Common myeloid progenitor, CD34-positive (primary cell): ENCODE measurements at regions of chr19 and their contacts with region 1.

Region 1: GRCh38 chr19:5578494-5578846 is 10.7 kb upstream of the TINCR start:
- DNase-seq: no peak
- H3K4me3 ChIP-seq: no peak overlapping the region
- H3K27ac ChIP-seq: no peak overlapping the region
- H3K4me1 ChIP-seq: peaks cover 0 to 10% (median 2%) of the 10 kb centered on the region in 4 experiments
- H3K27me3 ChIP-seq: no peaks in the 10 kb centered on the region

Region 2: DNA sequence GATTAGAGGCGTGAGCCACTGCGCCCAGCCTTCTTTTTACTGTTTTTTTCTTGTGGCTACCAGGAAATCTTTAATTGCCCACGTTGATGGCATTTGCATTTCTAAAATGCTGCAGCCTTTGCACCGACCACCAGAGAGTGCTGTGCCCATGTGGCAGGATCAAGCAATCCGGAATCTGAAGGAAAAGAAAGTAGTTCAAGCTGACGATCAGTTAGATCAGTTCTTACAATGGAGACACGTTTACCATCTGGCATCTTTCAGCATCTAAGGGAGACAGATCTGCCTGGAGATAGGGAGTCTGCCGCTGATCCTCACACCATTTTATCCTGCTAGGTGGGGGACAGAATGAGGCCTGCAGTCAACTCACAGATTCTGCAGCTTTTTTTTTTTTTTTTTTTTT is 30.6 kb before region 1 on chr19:
- CTCF ChIA-PET with region 1: interaction called, 28 read pairs
- POLR2A ChIA-PET with region 1: no interaction called
- DNase-seq: peak; percentile 74 to 86 (median 74)
- H3K4me3 ChIP-seq: peak overlapping the region in 1 of 7 experiments; percentile 42
- H3K27ac ChIP-seq: no peak overlapping the region
- H3K4me1 ChIP-seq: peaks cover 0 to 2% (median 0%) of the 10 kb centered on the region in 4 experiments
- H3K27me3 ChIP-seq: no peaks in the 10 kb centered on the region